A673 (cell line): ENCODE measurements at regions of chr3 and their contacts with region 1.

Region 1: DNA sequence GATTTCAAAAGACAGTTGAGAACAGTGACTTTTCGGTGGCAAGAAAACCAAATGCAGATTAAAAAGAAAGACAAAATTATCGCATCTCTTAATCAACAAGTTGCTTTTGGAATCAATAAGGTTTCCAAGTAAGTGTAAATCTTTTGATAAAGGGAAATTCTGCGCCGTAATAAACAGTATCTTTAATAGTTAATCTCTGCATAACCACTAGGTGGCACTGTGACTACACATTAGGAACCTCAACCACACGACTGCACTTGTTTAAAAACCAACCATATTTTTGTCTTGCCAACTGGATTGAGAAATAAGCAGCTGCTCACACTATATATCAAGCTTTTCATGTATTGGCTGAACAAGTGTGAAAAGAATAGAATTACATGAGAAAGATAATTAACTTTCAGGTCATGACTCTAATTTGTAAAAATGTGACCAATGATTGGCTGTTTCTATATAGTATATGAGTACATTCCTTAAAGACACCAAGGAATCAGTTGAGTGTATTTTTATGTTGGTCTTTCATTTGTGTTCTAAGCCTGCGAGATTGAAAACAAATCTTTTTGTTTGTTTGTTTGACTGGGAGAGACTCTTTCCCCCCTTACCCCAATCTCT is 72.7 kb downstream of the DZIP3 start:
- DNase-seq: peak; percentile 84
- H3K4me3 ChIP-seq: no peak overlapping the region
- H3K27ac ChIP-seq: no peak overlapping the region
- H3K4me1 ChIP-seq: no peaks in the 10 kb centered on the region
- H3K27me3 ChIP-seq: no peaks in the 10 kb centered on the region
- CTCF ChIP-seq: peak; percentile 78

Region 2: DNA sequence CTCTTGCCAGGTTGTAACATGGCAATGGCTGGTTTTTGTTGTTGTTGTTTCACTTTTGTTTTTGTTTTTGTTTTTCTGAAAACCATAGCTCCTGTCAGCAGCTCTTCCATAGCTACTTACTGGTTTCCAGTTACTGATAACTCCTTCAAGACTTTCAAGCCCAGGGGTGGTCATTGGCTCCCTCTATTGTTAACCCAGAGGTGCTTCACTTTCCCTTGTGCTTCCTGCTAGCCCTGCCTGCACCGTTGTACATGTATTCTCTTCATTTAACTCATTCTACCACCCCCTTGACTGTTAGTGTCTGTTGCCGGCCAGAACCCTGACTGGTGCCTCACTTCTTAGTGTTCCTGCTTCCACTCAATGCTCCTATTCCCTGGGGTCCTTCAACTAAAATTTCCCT is 156.2 kb after region 1 on chr3:
- CTCF ChIA-PET with region 1: interaction called, 9 read pairs
- POLR2A ChIA-PET with region 1: no interaction called
- intact Hi-C with region 1: loop called (anchors 1 kb)
- DNase-seq: peak; percentile 75
- H3K4me3 ChIP-seq: no peak overlapping the region
- H3K27ac ChIP-seq: no peak overlapping the region
- H3K4me1 ChIP-seq: no peaks in the 10 kb centered on the region
- H3K27me3 ChIP-seq: no peaks in the 10 kb centered on the region
- CTCF ChIP-seq: peak; percentile 71

Region 3: GRCh38 chr3:109081746-109082510 is 419.7 kb after region 1 on chr3:
- CTCF ChIA-PET with region 1: no interaction called
- POLR2A ChIA-PET with region 1: no interaction called
- intact Hi-C with region 1: loop called (anchors 2 kb)
- DNase-seq: peak; percentile 65
- H3K4me3 ChIP-seq: no peak overlapping the region
- H3K27ac ChIP-seq: no peak overlapping the region
- H3K4me1 ChIP-seq: no peaks in the 10 kb centered on the region
- H3K27me3 ChIP-seq: no peaks in the 10 kb centered on the region
- CTCF ChIP-seq: peak; percentile 87